Gastrocnemius medialis (tissue), 4 donors: ENCODE measurements at regions of chr11 and their contacts with region 1.

Region 1: GRCh38 chr11:12331239-12331874 is 46.0 kb upstream of the PARVA start:
- DNase-seq: peak; percentile 50 to 64
- ATAC-seq: peak; percentile 83 to 85
- H3K4me3 ChIP-seq: no peak overlapping the region
- H3K27ac ChIP-seq: no peak overlapping the region
- H3K4me1 ChIP-seq: peaks cover 3 to 5% of the 10 kb centered on the region in 2 donors
- H3K27me3 ChIP-seq: no peaks in the 10 kb centered on the region
- CTCF ChIP-seq: peak; percentile 64 to 84 (median 78)
- POLR2A ChIP-seq: no peak

Region 2: GRCh38 chr11:12377824-12378593 is 46.7 kb after region 1 on chr11:
- in situ Hi-C with region 1: no loop called
- intact Hi-C with region 1: loop called (anchors 1 kb)
- DNase-seq: peak; percentile 21 to 43
- ATAC-seq: peak; percentile 58 to 63
- H3K4me3 ChIP-seq: peak overlapping the region; percentile 57 to 75 (median 66)
- H3K27ac ChIP-seq: peak overlapping the region; percentile 71 to 85 (median 76)
- H3K4me1 ChIP-seq: peaks cover 5 to 15% of the 10 kb centered on the region in 2 donors
- H3K27me3 ChIP-seq: no peaks in the 10 kb centered on the region
- CTCF ChIP-seq: peak in 2 of 5 experiments; percentile 17 to 30
- POLR2A ChIP-seq: peak; percentile 22 to 50

Region 3: GRCh38 chr11:12508151-12508751 is 176.9 kb after region 1 on chr11:
- in situ Hi-C with region 1: no loop called
- intact Hi-C with region 1: loop called (anchors 10 kb)
- DNase-seq: peak in 1 of 2 donors; percentile 22
- ATAC-seq: peak; percentile 69 to 76
- H3K4me3 ChIP-seq: peak overlapping the region in 1 of 4 donors; percentile 13
- H3K27ac ChIP-seq: peak overlapping the region in 3 of 4 donors; percentile 44 to 57 (median 49)
- H3K4me1 ChIP-seq: peaks cover 0 to under 1% of the 10 kb centered on the region in 2 donors
- H3K27me3 ChIP-seq: no peaks in the 10 kb centered on the region
- CTCF ChIP-seq: no peak
- POLR2A ChIP-seq: no peak

Region 4: DNA sequence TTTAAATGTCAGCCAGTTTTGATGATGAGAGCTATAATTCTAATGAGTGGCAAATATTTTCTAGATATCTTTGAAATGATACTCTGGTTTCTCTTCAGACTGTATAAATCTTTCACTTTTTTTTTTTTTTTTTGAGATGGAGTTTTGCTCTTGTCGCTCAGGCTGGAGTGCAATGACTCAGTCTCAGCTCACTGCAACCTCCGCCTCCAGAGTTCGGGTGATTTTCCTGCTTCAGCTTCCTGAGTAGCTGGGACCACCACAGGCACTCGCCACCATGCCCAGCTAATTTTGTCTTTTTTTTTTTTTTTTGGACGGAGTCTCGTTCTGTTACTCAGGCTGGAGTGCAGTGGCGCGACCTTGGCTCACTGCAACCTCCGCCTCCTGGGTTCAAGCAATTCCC is 456.5 kb after region 1 on chr11:
- in situ Hi-C with region 1: no loop called
- intact Hi-C with region 1: no loop called
- DNase-seq: no peak
- ATAC-seq: no peak
- H3K4me3 ChIP-seq: no peak overlapping the region
- H3K27ac ChIP-seq: peak overlapping the region in 3 of 4 donors; percentile 87 to 95 (median 93)
- H3K4me1 ChIP-seq: peaks cover 46 to 83% of the 10 kb centered on the region in 2 donors
- H3K27me3 ChIP-seq: no peaks in the 10 kb centered on the region
- CTCF ChIP-seq: no peak
- POLR2A ChIP-seq: no peak

Region 5: DNA sequence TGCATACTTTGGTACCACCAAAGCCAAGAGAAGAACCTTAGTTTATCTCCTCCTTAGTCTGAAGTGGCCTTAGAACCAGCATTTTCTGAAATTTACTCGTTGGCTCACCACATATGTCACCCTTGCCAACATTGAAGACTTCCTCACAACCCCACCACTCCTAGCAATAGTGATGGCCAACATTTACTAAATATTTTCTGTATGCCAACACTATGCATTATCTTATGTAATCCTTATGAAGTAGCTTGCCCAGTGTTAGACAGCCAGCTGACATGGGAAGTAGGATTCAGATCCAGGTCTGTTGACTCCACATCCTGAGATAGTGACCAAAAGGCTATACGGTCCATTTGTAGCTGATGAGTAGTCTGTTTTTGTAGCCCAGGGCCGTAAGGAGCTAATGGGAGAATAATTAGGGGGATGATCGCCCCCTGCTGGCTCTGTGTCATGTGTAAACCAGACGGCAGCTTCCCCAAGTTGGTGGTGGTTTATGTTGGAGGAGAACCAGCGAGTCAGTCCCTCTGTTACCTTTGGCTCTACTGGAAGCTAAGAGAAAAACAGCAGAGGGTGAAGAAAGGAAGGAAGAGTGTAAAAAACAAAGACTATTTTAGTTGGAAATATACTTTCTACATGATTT is 557.3 kb after region 1 on chr11:
- in situ Hi-C with region 1: loop called (anchors 5 to 25 kb)
- intact Hi-C with region 1: no loop called
- DNase-seq: peak; percentile 69 to 83
- ATAC-seq: peak; percentile 84 to 85
- H3K4me3 ChIP-seq: no peak overlapping the region
- H3K27ac ChIP-seq: peak overlapping the region; percentile 61 to 82 (median 70)
- H3K4me1 ChIP-seq: peaks cover 25 to 32% of the 10 kb centered on the region in 2 donors
- H3K27me3 ChIP-seq: no peaks in the 10 kb centered on the region
- CTCF ChIP-seq: peak; percentile 63 to 81 (median 75)
- POLR2A ChIP-seq: no peak

Region 6: GRCh38 chr11:13152736-13153533 is 821.6 kb after region 1 on chr11:
- in situ Hi-C with region 1: loop called in 1 of 4 experiments (anchors 25 kb)
- intact Hi-C with region 1: no loop called
- DNase-seq: no peak
- ATAC-seq: no peak
- H3K4me3 ChIP-seq: no peak overlapping the region
- H3K27ac ChIP-seq: no peak overlapping the region
- H3K4me1 ChIP-seq: no peaks in the 10 kb centered on the region
- H3K27me3 ChIP-seq: no peaks in the 10 kb centered on the region
- CTCF ChIP-seq: peak in 2 of 5 experiments; percentile 17 to 30
- POLR2A ChIP-seq: no peak

Region 7: GRCh38 chr11:13183094-13183825 is 851.9 kb after region 1 on chr11:
- in situ Hi-C with region 1: loop called in 1 of 4 experiments (anchors 25 kb)
- intact Hi-C with region 1: loop called (anchors 5 kb)
- DNase-seq: no peak
- ATAC-seq: peak in 1 of 2 donors; percentile 26
- H3K4me3 ChIP-seq: peak overlapping the region in 2 of 4 donors; percentile 7 to 12
- H3K27ac ChIP-seq: no peak overlapping the region
- H3K4me1 ChIP-seq: peaks cover 0 to 5% of the 10 kb centered on the region in 2 donors
- H3K27me3 ChIP-seq: no peaks in the 10 kb centered on the region
- CTCF ChIP-seq: peak in 3 of 5 experiments; percentile 3 to 39 (median 34)
- POLR2A ChIP-seq: no peak